ENCODE measurements at regions of chr16 and their contacts with region 1.

Region 1: DNA sequence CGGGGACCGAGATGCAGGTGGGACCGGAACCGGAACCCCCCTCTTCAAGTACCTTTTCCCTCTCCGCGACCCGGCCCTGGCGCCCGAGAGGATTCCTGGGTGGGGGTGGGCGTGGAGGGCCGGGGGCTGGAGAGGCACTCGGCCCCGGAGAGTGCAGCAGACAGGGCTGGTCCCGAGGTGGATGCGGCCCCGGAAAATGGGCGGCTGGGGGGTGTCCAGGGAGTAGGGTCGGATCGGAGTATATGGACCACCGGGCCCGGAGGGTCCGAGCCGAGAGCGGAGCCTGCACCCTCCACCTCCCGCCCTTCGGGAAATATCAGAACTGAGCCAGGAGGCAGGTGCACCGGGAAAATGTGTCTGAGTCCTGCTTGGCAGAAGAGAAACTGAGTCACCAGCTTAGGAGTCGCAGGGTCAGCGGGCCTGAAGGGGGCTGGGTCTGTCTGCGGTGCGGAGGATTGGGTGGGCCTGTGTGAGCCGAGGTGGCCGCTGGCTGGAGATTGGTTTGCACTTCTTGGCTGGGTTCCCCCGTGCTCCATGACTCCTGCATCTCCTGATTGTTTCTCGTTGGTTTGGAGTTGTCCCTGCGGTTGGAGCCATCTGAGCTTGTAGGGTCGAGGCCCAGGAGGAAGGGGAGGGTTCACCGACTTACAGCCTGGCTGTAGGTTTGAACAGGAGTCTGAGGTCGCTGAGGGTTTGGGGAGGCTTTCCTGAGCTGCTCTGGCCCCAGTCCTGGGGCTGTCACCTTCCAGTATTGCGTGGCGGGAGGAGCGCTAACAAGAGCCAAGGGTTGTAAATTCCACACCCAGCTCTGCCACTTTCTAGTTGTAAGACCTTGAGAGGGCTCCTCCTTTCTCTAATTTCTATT is 518 bp downstream of the SH2B1 start:
- DNase-seq: no peak
- ATAC-seq: peak; percentile 6
- H3K4me3 ChIP-seq: peak overlapping the region; percentile 71 to 73
- H3K27ac ChIP-seq: peak overlapping the region; percentile 97
- H3K4me1 ChIP-seq: peaks cover 10% of the 10 kb centered on the region
- H3K27me3 ChIP-seq: no peaks in the 10 kb centered on the region
- CTCF ChIP-seq: no peak

Region 2: GRCh38 chr16:28927815-28928214 is 63.7 kb after region 1 on chr16:
- CTCF ChIA-PET with region 1: no interaction called
- POLR2A ChIA-PET with region 1: interaction called, 15 read pairs
- in situ Hi-C with region 1: no loop called
- intact Hi-C with region 1: no loop called
- DNase-seq: no peak
- ATAC-seq: no peak
- H3K4me3 ChIP-seq: no peak overlapping the region
- H3K27ac ChIP-seq: no peak overlapping the region
- H3K4me1 ChIP-seq: peaks cover 6% of the 10 kb centered on the region
- H3K27me3 ChIP-seq: no peaks in the 10 kb centered on the region
- CTCF ChIP-seq: no peak

Measured in Panc1 (cell line).